ENCODE measurements at regions of chr21 and their contacts with region 1.

Region 1: GRCh38 chr21:42145569-42146272 is 73.2 kb upstream of the ABCG1 start:
- DNase-seq: peak; percentile 69
- H3K4me3 ChIP-seq: no peak overlapping the region
- H3K27ac ChIP-seq: no peak overlapping the region
- H3K4me1 ChIP-seq: peaks cover 3% of the 10 kb centered on the region
- H3K27me3 ChIP-seq: no peaks in the 10 kb centered on the region
- CTCF ChIP-seq: peak; percentile 76 to 96 (median 95)
- POLR2A ChIP-seq: no peak

Region 2: DNA sequence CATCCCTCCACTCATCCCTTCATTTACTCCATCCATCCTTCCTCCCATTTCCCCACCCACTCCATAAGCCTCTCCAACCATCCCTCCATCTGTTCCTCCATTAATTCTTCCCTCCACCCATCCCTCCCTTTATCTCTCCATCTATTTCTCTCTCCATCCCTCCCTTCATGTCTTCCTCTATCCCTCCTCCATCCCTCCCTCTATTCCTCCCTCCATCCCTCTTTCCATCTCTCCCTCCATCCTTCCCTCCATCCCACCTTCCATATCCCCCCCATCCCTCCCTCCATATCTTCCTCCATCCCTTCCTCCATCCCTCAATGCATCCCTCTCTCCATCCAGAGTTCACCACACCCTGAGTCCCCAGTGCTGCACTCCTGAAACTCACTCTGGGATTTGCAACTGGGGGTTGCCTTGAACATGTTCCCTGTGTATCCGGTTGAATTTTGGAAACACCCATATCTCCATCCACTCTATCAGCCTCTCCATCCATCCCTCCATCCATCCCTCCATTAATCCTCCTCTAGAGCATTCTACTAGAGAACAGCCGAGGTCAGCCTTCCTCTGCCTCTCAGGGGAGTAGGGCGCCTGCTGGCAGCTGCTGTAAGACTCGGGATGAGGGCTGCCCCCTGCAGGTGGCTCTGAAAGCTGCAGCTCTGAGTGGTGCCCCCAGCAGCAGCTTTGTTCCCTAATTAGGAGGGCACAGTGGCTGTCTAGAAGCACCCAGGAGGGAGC is 112.6 kb after region 1 on chr21:
- intact Hi-C with region 1: loop called (anchors 10 kb)
- DNase-seq: peak; percentile 84
- H3K4me3 ChIP-seq: no peak overlapping the region
- H3K27ac ChIP-seq: no peak overlapping the region
- H3K4me1 ChIP-seq: peaks cover 6% of the 10 kb centered on the region
- H3K27me3 ChIP-seq: no peaks in the 10 kb centered on the region
- CTCF ChIP-seq: peak; percentile 44 to 69 (median 58)
- POLR2A ChIP-seq: no peak

Measured in testis (tissue), 5 donors.